PC-9 (cell line): ENCODE measurements at regions of chr15 and their contacts with region 1.

Region 1: GRCh38 chr15:34101366-34102175 is at the starts of genes EMC7 and PGBD4:
- DNase-seq: peak; percentile 92 to 96
- H3K4me3 ChIP-seq: peak within 1 kb of the TSS; percentile 70
- H3K27ac ChIP-seq: peak within 1 kb of the TSS; percentile 65
- H3K4me1 ChIP-seq: peaks cover 19% of the 10 kb centered on the region
- H3K27me3 ChIP-seq: no peaks in the 10 kb centered on the region
- CTCF ChIP-seq: no peak
- total RNA-seq, gene EMC7: 33.9 and 34.3 TPM in 2 replicates
- total RNA-seq, gene PGBD4: 1.8 and 2.0 TPM in 2 replicates

Region 2: DNA sequence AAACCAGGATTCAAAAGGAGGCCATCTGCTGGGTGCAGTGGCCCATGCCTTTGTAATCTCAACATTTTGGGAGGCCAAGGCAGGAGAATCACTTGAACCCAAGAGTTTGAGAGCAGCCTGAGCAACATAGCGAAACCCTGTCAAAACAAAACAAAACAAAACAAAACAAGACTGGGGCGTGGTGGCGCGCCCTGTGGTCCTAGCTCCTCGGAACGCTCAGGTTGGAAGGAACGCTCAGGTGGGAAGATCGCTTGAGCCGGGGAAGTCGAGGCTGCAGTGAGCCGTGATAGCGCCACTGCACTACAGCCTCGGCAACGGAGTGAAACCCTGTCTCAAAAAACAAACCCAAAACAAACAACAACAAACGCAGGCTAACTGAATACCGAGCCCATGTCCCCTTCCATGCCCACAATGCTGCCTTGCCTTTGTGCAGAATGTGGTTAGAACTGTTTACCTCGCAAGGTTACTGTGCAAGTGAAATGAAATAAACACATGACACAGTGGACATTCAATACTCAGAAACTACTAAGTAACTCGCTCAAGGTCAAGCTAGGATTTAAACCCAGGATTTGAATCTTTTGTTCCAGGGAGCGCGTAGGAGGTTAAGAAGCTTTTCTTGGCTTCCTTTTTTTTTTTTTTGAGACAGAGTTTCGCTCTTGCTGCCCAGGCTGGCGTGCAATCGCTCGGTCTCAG is 122.5 kb after region 1 on chr15:
- CTCF ChIA-PET with region 1: no interaction called
- POLR2A ChIA-PET with region 1: no interaction called
- intact Hi-C with region 1: loop called (anchors 1 kb)
- DNase-seq: peak in 1 of 2 experiments; percentile 1
- H3K4me3 ChIP-seq: peak overlapping the region; percentile 77
- H3K27ac ChIP-seq: peak overlapping the region; percentile 98
- H3K4me1 ChIP-seq: peaks cover 6% of the 10 kb centered on the region; the same call in 1 of the 2 replicates
- H3K27me3 ChIP-seq: no peaks in the 10 kb centered on the region
- CTCF ChIP-seq: no peak

Region 3: DNA sequence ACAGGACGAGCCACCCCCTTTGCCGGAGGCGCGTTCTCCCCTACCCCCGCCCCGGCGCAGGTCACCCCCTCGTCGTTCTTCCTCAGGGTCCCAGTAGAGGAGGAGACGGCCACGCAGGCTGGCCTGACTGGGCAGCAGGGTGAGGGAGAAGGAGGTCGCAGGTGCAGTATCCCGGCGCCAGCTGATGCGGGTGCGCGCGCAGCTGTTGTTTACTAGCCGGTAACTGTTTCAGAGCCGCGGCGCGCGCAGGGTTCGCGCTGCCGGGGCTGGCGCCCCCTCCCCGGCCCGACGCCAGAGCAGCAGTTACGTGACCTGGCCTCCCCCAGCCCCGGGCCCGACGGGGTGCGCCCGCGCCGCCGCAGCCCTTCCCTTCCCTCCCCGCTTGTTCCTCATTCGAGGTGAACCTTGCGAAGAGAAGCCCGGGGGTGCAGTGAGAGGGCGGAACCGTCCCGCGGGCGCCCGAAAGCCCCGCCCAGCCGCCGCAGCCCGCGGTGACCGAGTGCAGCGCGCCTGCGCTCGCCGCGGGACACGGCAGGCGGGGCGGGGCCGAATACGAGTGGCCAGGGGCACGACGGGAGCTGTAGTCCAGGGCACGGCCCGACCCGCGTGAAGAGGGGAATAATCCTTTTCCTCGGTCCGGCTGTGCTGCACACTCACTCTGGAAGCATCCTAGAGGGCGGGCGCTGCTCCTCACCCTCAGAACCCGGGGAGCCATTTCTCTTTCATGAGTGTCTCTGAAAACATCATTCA is 236.2 kb after region 1 on chr15 and contains the start of gene SLC12A6:
- CTCF ChIA-PET with region 1: interaction called, 3 read pairs
- POLR2A ChIA-PET with region 1: no interaction called
- intact Hi-C with region 1: loop called (anchors 10 kb)
- DNase-seq: peak; percentile 68 to 90
- H3K4me3 ChIP-seq: peak within 1 kb of the TSS; percentile 86
- H3K27ac ChIP-seq: peak within 1 kb of the TSS; percentile 89
- H3K4me1 ChIP-seq: peaks cover 41% of the 10 kb centered on the region
- H3K27me3 ChIP-seq: no peaks in the 10 kb centered on the region
- CTCF ChIP-seq: no peak
- total RNA-seq, gene SLC12A6: 27.5 and 28.3 TPM in 2 replicates

Region 4: DNA sequence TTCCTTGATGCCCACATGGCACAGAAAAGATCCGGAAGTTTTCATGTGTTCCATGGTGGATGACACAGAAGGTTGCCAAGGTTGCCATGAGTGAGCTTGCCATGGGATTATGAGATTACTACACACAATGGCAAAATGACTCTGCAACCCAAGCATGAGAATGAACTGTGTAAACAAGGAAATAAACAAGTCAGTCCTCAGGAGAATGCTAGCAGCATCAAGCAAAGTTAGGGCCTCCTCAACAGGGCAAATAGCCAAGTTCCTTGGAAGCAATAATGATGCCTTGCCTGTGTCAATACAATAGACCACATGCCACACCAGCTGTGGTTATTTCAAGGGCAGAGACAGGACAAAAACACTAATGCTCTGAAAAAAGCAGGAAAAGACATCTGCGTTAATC is 826.2 kb after region 1 on chr15:
- CTCF ChIA-PET with region 1: no interaction called
- POLR2A ChIA-PET with region 1: no interaction called
- intact Hi-C with region 1: loop called (anchors 10 kb)
- DNase-seq: peak in 1 of 2 experiments; percentile 44
- H3K4me3 ChIP-seq: no peak overlapping the region
- H3K27ac ChIP-seq: no peak overlapping the region
- H3K4me1 ChIP-seq: no peaks in the 10 kb centered on the region
- H3K27me3 ChIP-seq: no peaks in the 10 kb centered on the region
- CTCF ChIP-seq: no peak